ENCODE measurements at regions of chr10 and their contacts with region 1.

Region 1: GRCh38 chr10:43407576-43408330 is 1.2 kb downstream of the HNRNPF start:
- DNase-seq: peak; percentile 89
- ATAC-seq: peak; percentile 53
- H3K4me3 ChIP-seq: peak overlapping the region; percentile 86 to 95 (median 87)
- H3K27ac ChIP-seq: peak overlapping the region; percentile 100
- H3K4me1 ChIP-seq: peaks cover 66% of the 10 kb centered on the region
- H3K27me3 ChIP-seq: no peaks in the 10 kb centered on the region; a peak in 1 of 5 replicates
- CTCF ChIP-seq: peak; percentile 59
- EP300 ChIP-seq: no peak; a peak in 1 of 4 replicates
- POLR2A ChIP-seq: peak; percentile 78 to 94
- RAD21 ChIP-seq: peak; percentile 34; the same call in 1 of the 2 replicates

Region 2: DNA sequence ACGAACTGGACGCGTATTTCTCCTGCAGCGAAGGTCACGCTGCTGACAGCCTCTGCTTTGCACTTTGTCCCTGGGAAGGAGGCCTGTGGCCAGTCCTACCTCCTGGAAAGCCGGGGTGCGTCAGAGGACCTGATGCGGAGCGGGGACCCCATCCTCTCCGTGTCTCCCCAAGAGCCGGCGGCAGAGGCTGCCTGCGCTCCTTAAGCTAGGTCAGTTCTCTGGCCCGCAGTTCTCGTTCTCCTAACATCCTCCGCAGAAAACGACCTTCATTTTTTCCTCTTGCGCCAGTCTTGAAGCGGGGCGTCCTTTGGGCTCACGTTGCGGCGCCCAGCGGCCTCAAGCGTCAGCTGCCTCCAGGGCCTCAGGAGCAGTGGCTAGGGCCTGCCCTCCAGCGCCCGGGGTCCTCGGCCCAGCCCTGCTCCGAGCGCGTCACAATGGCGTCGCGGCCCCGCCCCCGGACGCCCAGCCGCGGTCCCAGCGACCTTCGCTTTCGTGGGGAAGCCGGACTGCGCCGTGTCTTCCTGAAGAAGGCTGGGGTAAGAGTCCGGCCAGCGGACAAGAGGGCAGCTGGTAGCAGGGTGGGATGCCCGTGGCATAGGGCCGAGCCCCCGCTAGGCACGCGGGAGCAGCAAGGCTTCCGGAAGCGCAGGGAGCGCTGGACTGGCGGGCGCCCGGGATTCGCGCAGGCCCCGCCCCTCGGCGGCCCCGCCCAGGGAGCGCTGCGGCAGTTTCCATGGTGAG is 28.8 kb after region 1 on chr10 and contains the start of gene ZNF487:
- CTCF ChIA-PET with region 1: no interaction called
- POLR2A ChIA-PET with region 1: interaction called, 24 read pairs
- in situ Hi-C with region 1: no loop called
- intact Hi-C with region 1: no loop called
- DNase-seq: peak; percentile 80
- ATAC-seq: peak; percentile 96
- H3K4me3 ChIP-seq: peak within 1 kb of the TSS; percentile 63 to 98 (median 87)
- H3K27ac ChIP-seq: peak within 1 kb of the TSS; percentile 100
- H3K4me1 ChIP-seq: peaks cover 29% of the 10 kb centered on the region
- H3K27me3 ChIP-seq: no peaks in the 10 kb centered on the region; a peak in 1 of 5 replicates
- CTCF ChIP-seq: peak; percentile 69
- EP300 ChIP-seq: peak in 1 of 2 experiments; percentile 26; a peak in 1 of 4 replicates
- POLR2A ChIP-seq: peak; percentile 88 to 89
- RAD21 ChIP-seq: peak; percentile 62; the same call in 1 of the 2 replicates
- total RNA-seq, gene ZNF487: 6.1 and 7.4 TPM in 2 replicates

Measured in HepG2 (cell line).